ENCODE measurements at regions of chr20 and their contacts with region 1.

Region 1: DNA sequence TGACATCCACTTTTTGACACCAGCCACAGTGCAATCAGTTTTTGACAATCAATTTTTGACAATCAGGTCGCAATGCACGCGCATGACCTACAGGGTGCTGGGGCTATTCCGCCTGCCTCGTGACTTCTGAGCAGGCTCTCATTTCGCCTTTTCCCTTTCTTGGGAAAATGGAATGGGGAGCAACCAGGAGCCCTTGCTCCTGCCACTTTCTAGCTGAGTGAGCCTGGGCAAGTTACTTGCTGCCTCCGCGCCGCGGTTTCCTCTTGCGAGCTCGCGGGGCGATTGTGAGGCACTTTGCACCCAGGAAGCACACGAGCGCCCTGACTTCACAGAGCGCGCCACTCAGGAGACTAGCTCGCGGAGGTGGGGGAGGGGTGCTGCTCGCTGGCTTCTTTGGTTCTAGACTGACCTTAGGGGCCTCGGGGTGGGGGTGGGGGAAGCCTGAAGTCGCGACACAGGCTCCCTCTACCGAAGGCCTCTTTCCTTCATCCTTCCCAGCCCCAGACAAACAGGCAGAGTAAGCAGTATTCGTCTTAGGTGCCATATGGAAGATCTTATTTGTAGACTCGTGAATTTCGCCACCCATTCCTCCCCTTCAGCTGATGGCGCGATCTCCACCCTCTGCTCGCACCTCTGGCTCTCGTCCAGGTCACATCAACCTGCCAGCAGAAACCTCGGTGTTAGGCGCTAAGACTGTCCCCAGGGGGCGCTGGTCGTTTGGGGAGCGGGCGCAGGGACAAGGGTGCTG is 4.6 kb downstream of the TP53TG5 start:
- DNase-seq: peak; percentile 86 to 90 (median 87)
- H3K4me3 ChIP-seq: peak overlapping the region; percentile 60 to 71
- H3K4me3 Mint-ChIP-seq: peak overlapping the region; percentile 87 to 95 (median 90)
- H3K27ac ChIP-seq: peak overlapping the region; percentile 63
- H3K27ac Mint-ChIP-seq: peak overlapping the region; percentile 91 to 98 (median 95)
- H3K4me1 ChIP-seq: peaks cover 22% of the 10 kb centered on the region
- H3K4me1 Mint-ChIP-seq: peaks cover 14 to 44% (median 32%) of the 10 kb centered on the region in 4 donors
- H3K27me3 ChIP-seq: no peaks in the 10 kb centered on the region
- H3K27me3 Mint-ChIP-seq: no peaks in the 10 kb centered on the region

Region 2: DNA sequence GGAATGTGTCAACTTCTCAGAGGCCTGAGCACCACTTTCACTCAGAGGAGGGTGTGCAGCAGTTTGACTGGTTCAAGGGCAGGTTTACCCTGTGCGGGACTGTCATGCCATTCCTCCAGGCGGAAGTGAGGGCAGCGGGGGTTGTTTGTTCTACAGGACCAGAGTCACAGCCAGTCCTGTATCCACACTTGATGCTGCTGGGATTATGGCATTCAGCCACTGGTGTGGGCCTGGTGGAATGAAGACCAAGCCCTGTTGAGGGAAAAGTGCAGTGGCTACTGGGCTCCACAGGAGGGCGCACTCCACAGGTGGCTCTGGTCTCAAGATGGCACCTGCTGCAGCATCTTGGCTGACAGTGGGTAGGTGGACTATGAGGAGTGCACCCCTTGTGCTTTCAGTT is 137.5 kb before region 1 on chr20:
- CTCF ChIA-PET with region 1: no interaction called
- POLR2A ChIA-PET with region 1: no interaction called
- intact Hi-C with region 1: no loop called
- DNase-seq: no peak
- H3K4me3 ChIP-seq: no peak overlapping the region
- H3K4me3 Mint-ChIP-seq: no peak overlapping the region
- H3K27ac ChIP-seq: no peak overlapping the region
- H3K27ac Mint-ChIP-seq: no peak overlapping the region
- H3K4me1 ChIP-seq: no peaks in the 10 kb centered on the region
- H3K4me1 Mint-ChIP-seq: no peaks in the 10 kb centered on the region
- H3K27me3 ChIP-seq: no peaks in the 10 kb centered on the region
- H3K27me3 Mint-ChIP-seq: peaks cover 16 to 35% of the 10 kb centered on the region in 2 donors

Region 3: GRCh38 chr20:45322952-45323383 is 50.6 kb before region 1 on chr20:
- CTCF ChIA-PET with region 1: interaction called, 24 read pairs
- POLR2A ChIA-PET with region 1: interaction called, 16 read pairs
- intact Hi-C with region 1: no loop called
- DNase-seq: no peak
- H3K4me3 ChIP-seq: no peak overlapping the region
- H3K4me3 Mint-ChIP-seq: no peak overlapping the region
- H3K27ac ChIP-seq: no peak overlapping the region
- H3K27ac Mint-ChIP-seq: no peak overlapping the region
- H3K4me1 ChIP-seq: peaks cover 29% of the 10 kb centered on the region
- H3K4me1 Mint-ChIP-seq: peaks cover 13 to 32% (median 22%) of the 10 kb centered on the region in 4 donors
- H3K27me3 ChIP-seq: no peaks in the 10 kb centered on the region
- H3K27me3 Mint-ChIP-seq: no peaks in the 10 kb centered on the region

Region 4: GRCh38 chr20:45387274-45387673 is 13.7 kb after region 1 on chr20:
- CTCF ChIA-PET with region 1: interaction called, 18 read pairs
- POLR2A ChIA-PET with region 1: interaction called, 13 read pairs
- intact Hi-C with region 1: no loop called
- DNase-seq: no peak
- H3K4me3 ChIP-seq: no peak overlapping the region
- H3K4me3 Mint-ChIP-seq: no peak overlapping the region
- H3K27ac ChIP-seq: no peak overlapping the region
- H3K27ac Mint-ChIP-seq: no peak overlapping the region
- H3K4me1 ChIP-seq: no peaks in the 10 kb centered on the region
- H3K4me1 Mint-ChIP-seq: peaks cover 0 to 5% (median 2%) of the 10 kb centered on the region in 4 donors
- H3K27me3 ChIP-seq: no peaks in the 10 kb centered on the region
- H3K27me3 Mint-ChIP-seq: no peaks in the 10 kb centered on the region

Region 5: DNA sequence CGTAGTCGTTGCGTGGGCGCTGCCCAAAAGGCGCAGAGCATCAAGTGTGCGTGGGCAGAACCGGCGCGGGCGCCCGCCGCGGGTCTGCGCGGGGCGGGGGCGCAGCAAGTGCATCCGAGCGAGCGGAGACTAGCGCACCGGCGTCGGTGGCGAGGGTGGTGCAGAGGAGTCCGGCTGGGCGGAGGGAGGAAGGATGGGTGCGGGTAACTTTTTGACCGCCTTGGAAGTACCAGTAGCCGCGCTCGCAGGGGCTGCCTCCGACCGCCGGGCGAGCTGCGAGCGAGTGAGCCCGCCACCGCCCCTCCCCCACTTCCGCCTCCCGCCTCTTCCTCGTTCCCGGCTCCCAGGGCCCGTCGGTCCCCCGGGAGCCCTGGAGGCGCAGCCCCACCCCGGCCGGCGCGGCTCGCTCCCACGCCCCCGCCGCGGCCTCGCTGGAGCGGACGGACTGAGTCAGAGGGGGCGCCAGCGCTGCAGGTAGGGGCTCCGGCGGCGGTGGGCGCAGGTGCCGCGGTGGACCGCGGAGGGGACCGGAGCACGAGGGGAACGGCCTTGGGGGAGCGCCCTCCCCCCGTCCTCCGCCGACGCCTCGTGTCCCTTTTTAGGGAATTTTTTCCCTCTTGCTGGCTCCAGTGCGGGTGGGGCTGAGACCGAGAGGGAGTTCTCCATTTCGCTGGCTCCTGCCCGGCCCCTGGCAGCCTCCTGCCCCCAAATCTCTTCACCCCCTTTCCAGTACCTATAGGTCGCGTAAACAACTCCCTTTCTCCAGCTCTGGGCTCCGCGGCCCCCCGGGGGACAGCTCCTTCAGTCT is 32.9 kb after region 1 on chr20:
- CTCF ChIA-PET with region 1: interaction called, 16 read pairs
- POLR2A ChIA-PET with region 1: interaction called, 40 read pairs
- intact Hi-C with region 1: loop called (anchors 1 kb)
- DNase-seq: peak; percentile 32 to 47 (median 37)
- H3K4me3 ChIP-seq: peak overlapping the region; percentile 49 to 79
- H3K4me3 Mint-ChIP-seq: peak overlapping the region; percentile 80 to 90 (median 84)
- H3K27ac ChIP-seq: peak overlapping the region; percentile 58
- H3K27ac Mint-ChIP-seq: peak overlapping the region; percentile 19 to 91 (median 87)
- H3K4me1 ChIP-seq: peaks cover 19% of the 10 kb centered on the region
- H3K4me1 Mint-ChIP-seq: peaks cover 12 to 20% (median 15%) of the 10 kb centered on the region in 4 donors
- H3K27me3 ChIP-seq: no peaks in the 10 kb centered on the region
- H3K27me3 Mint-ChIP-seq: no peaks in the 10 kb centered on the region

Region 6: GRCh38 chr20:45427236-45428149 is 54.0 kb after region 1 on chr20:
- CTCF ChIA-PET with region 1: interaction called, 543 read pairs
- POLR2A ChIA-PET with region 1: interaction called, 3 read pairs
- intact Hi-C with region 1: no loop called
- DNase-seq: no peak
- H3K4me3 ChIP-seq: no peak overlapping the region
- H3K4me3 Mint-ChIP-seq: no peak overlapping the region
- H3K27ac ChIP-seq: no peak overlapping the region
- H3K27ac Mint-ChIP-seq: peak overlapping the region in 4 of 7 donors; percentile 45 to 61 (median 56)
- H3K4me1 ChIP-seq: peaks cover 5% of the 10 kb centered on the region
- H3K4me1 Mint-ChIP-seq: peaks cover 0 to 7% (median 2%) of the 10 kb centered on the region in 4 donors
- H3K27me3 ChIP-seq: no peaks in the 10 kb centered on the region
- H3K27me3 Mint-ChIP-seq: no peaks in the 10 kb centered on the region

Region 7: GRCh38 chr20:45581702-45582101 is 208.2 kb after region 1 on chr20:
- CTCF ChIA-PET with region 1: no interaction called
- POLR2A ChIA-PET with region 1: no interaction called
- intact Hi-C with region 1: no loop called
- DNase-seq: no peak
- H3K4me3 ChIP-seq: no peak overlapping the region
- H3K4me3 Mint-ChIP-seq: no peak overlapping the region
- H3K27ac ChIP-seq: no peak overlapping the region
- H3K27ac Mint-ChIP-seq: no peak overlapping the region
- H3K4me1 ChIP-seq: no peaks in the 10 kb centered on the region
- H3K4me1 Mint-ChIP-seq: no peaks in the 10 kb centered on the region
- H3K27me3 ChIP-seq: no peaks in the 10 kb centered on the region
- H3K27me3 Mint-ChIP-seq: peaks cover 18 to 20% of the 10 kb centered on the region in 2 donors

Region 8: GRCh38 chr20:45771182-45771759 is 397.7 kb after region 1 on chr20:
- CTCF ChIA-PET with region 1: interaction called, 10 read pairs
- POLR2A ChIA-PET with region 1: no interaction called
- intact Hi-C with region 1: no loop called
- DNase-seq: peak; percentile 73 to 79 (median 75)
- H3K4me3 ChIP-seq: no peak overlapping the region
- H3K4me3 Mint-ChIP-seq: peak overlapping the region in 1 of 8 donors; percentile 21
- H3K27ac ChIP-seq: no peak overlapping the region
- H3K27ac Mint-ChIP-seq: peak overlapping the region in 1 of 7 donors; percentile 61
- H3K4me1 ChIP-seq: no peaks in the 10 kb centered on the region
- H3K4me1 Mint-ChIP-seq: peaks cover 1 to 7% (median 4%) of the 10 kb centered on the region in 4 donors
- H3K27me3 ChIP-seq: no peaks in the 10 kb centered on the region
- H3K27me3 Mint-ChIP-seq: peaks cover 10 to 23% of the 10 kb centered on the region in 2 donors

Measured in CD4-positive, alpha-beta memory T cell (primary cell).